Activated naive CD4-positive, alpha-beta T cell treated with anti-CD3 and anti-CD28 coated beads for 36 hours (primary cell): ENCODE measurements at regions of chr10 and their contacts with region 1.

Region 1: GRCh38 chr10:44932517-44933450 is 21.6 kb downstream of the TMEM72 start:
- DNase-seq: peak; percentile 91
- H3K4me3 Mint-ChIP-seq: no peak overlapping the region
- H3K27ac Mint-ChIP-seq: no peak overlapping the region
- H3K4me1 Mint-ChIP-seq: peaks cover 7% of the 10 kb centered on the region
- H3K27me3 Mint-ChIP-seq: peaks cover 4% of the 10 kb centered on the region

Region 2: GRCh38 chr10:44952779-44953231 is 20.0 kb after region 1 on chr10:
- CTCF ChIA-PET with region 1: interaction called, 12 read pairs
- intact Hi-C with region 1: loop called (anchors 2 kb)
- DNase-seq: no peak
- H3K4me3 Mint-ChIP-seq: no peak overlapping the region
- H3K27ac Mint-ChIP-seq: no peak overlapping the region
- H3K4me1 Mint-ChIP-seq: peaks cover 6% of the 10 kb centered on the region
- H3K27me3 Mint-ChIP-seq: no peaks in the 10 kb centered on the region

Region 3: GRCh38 chr10:44965651-44966097 is 32.9 kb after region 1 on chr10:
- CTCF ChIA-PET with region 1: interaction called, 26 read pairs
- intact Hi-C with region 1: no loop called
- DNase-seq: peak; percentile 40
- H3K4me3 Mint-ChIP-seq: no peak overlapping the region
- H3K27ac Mint-ChIP-seq: peak overlapping the region; percentile 61
- H3K4me1 Mint-ChIP-seq: peaks cover 33% of the 10 kb centered on the region
- H3K27me3 Mint-ChIP-seq: no peaks in the 10 kb centered on the region

Region 4: GRCh38 chr10:44990302-44990655 is 57.5 kb after region 1 on chr10:
- CTCF ChIA-PET with region 1: interaction called, 5 read pairs
- intact Hi-C with region 1: loop called (anchors 1 kb)
- DNase-seq: no peak
- H3K4me3 Mint-ChIP-seq: no peak overlapping the region
- H3K27ac Mint-ChIP-seq: no peak overlapping the region
- H3K4me1 Mint-ChIP-seq: peaks cover 6% of the 10 kb centered on the region
- H3K27me3 Mint-ChIP-seq: no peaks in the 10 kb centered on the region

Region 5: GRCh38 chr10:45235798-45236231 is 303.0 kb after region 1 on chr10:
- CTCF ChIA-PET with region 1: no interaction called
- intact Hi-C with region 1: loop called (anchors 10 kb)
- DNase-seq: no peak
- H3K4me3 Mint-ChIP-seq: no peak overlapping the region
- H3K27ac Mint-ChIP-seq: no peak overlapping the region
- H3K4me1 Mint-ChIP-seq: peaks cover 5% of the 10 kb centered on the region
- H3K27me3 Mint-ChIP-seq: peaks cover 4% of the 10 kb centered on the region

Region 6: GRCh38 chr10:45581582-45582385 is 649.0 kb after region 1 on chr10:
- CTCF ChIA-PET with region 1: no interaction called
- intact Hi-C with region 1: no loop called
- DNase-seq: peak; percentile 47
- H3K4me3 Mint-ChIP-seq: peak overlapping the region; percentile 35
- H3K27ac Mint-ChIP-seq: peak overlapping the region; percentile 97
- H3K4me1 Mint-ChIP-seq: peaks cover 45% of the 10 kb centered on the region
- H3K27me3 Mint-ChIP-seq: no peaks in the 10 kb centered on the region